ENCODE measurements at regions of chr11 and their contacts with region 1.

Region 1: DNA sequence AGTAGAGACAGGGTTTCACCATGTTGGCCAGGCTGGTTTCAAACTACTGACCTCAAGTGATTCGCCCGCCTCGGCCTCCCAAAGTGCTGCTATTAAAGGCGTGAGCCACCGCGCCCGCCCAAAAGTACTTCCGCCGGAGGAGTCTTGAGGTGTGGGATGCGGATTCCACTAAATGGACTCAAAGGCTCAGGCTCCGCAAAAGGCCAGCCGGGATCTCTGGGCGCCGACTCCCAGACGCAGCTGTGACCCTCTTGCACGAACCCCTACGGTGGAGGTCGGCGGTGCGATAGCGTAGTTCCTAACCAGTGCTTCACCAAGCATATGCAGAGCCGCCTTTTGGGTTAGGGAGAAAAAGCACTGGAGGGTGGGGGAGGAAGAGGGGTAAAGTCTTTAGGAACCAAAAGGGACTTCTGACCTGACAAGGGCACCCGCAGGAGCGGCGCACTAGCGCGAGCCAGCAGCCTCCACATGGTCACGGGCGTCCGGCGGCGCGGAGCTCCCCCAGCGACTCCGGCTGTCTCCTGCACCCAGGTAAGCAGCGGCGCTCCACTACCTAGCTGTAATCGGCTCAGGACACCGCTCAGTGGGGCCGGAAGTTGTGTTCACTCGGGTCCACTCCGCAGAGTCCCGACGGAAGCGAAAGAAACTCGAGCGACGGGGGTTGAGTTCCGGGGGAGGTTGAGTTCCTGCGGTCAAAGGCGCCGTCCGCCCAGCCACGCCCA is at the start of gene MRPL16:
- DNase-seq: peak; percentile 85 to 88
- ATAC-seq: peak; percentile 97 to 99 (median 98)
- H3K4me3 ChIP-seq: peak within 1 kb of the TSS; percentile 82 to 97 (median 92)
- H3K27ac ChIP-seq: peak within 1 kb of the TSS; percentile 62 to 91 (median 88)
- H3K4me1 ChIP-seq: peaks cover 0 to 20% (median 13%) of the 10 kb centered on the region in 9 donors
- H3K27me3 ChIP-seq: no peaks in the 10 kb centered on the region
- CTCF ChIP-seq: peak in 2 of 9 donors; percentile 17 to 23
- total RNA-seq, gene MRPL16: 69.9 to 108 (median 89.8) TPM

Region 2: DNA sequence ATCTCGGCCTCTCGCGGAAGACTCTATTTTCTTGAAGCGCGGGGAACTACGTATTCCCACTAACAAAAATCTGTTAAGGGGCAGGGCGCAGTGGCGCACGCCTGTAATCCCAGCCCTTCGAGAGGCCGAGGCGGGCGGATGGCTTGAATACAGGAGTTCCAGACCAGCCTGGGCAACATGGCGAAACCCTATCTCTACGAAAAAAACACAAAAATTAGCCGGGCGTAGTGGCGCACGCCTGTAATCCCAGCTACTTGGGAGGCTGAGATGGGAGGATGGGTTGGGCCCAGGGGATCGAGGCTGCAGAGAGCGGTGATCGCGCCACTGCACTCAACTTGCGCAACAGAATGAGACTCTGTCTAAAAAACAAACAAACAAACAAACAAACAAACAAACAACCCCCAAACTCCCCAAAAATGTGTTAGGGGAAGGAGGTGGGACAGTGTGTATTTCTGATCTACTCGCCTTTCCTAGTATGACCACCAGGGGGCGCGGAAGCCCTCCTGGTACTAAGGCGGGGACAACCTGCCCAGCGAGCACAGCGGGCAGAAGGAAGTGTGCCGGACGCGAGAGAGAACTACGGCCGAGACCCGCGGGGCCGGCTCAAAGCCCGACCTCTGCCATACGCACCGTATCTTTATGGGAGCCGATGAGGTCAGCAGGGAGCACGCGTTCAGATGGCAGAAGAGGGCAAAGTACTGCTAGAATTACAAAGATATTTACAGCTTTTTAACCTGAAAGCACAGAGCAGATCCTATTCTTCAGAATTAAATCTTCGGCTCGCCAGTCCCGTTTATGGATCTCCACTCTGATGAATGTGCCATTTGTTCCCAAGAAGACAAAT is 56.5 kb before region 1 on chr11:
- intact Hi-C with region 1: loop called in 1 of 10 experiments (anchors 2 kb)
- DNase-seq: peak; percentile 84 to 87
- ATAC-seq: peak; percentile 70 to 93 (median 85)
- H3K4me3 ChIP-seq: peak overlapping the region; percentile 81 to 96 (median 88)
- H3K27ac ChIP-seq: peak overlapping the region in 9 of 10 donors; percentile 93 to 98 (median 96)
- H3K4me1 ChIP-seq: peaks cover 0 to 26% (median 15%) of the 10 kb centered on the region in 9 donors
- H3K27me3 ChIP-seq: no peaks in the 10 kb centered on the region
- CTCF ChIP-seq: peak; percentile 92 to 98 (median 94)